Naive thymus-derived CD4-positive, alpha-beta T cell (primary cell): ENCODE measurements at regions of chr4 and their contacts with region 1.

Region 1: GRCh38 chr4:154779362-154779947 is 1.6 kb upstream of the RBM46 start:
- DNase-seq: no peak
- ATAC-seq: no peak
- H3K4me3 ChIP-seq: no peak overlapping the region
- H3K4me3 Mint-ChIP-seq: no peak overlapping the region
- H3K27ac ChIP-seq: no peak overlapping the region
- H3K27ac Mint-ChIP-seq: no peak overlapping the region
- H3K4me1 ChIP-seq: no peaks in the 10 kb centered on the region
- H3K4me1 Mint-ChIP-seq: no peaks in the 10 kb centered on the region
- H3K27me3 ChIP-seq: no peaks in the 10 kb centered on the region
- H3K27me3 Mint-ChIP-seq: peaks cover 9 to 41% (median 30%) of the 10 kb centered on the region in 5 donors

Region 2: GRCh38 chr4:154634058-154634457 is 145.4 kb before region 1 on chr4:
- CTCF ChIA-PET with region 1: no interaction called
- POLR2A ChIA-PET with region 1: no interaction called
- intact Hi-C with region 1: loop called in 1 of 2 experiments (anchors 10 kb)
- DNase-seq: no peak
- ATAC-seq: no peak
- H3K4me3 ChIP-seq: no peak overlapping the region
- H3K4me3 Mint-ChIP-seq: no peak overlapping the region
- H3K27ac ChIP-seq: no peak overlapping the region
- H3K27ac Mint-ChIP-seq: no peak overlapping the region
- H3K4me1 ChIP-seq: no peaks in the 10 kb centered on the region
- H3K4me1 Mint-ChIP-seq: no peaks in the 10 kb centered on the region
- H3K27me3 ChIP-seq: peaks cover 0 to 8% of the 10 kb centered on the region in 2 donors
- H3K27me3 Mint-ChIP-seq: peaks cover 21 to 36% (median 31%) of the 10 kb centered on the region in 5 donors